Upper lobe of right lung (tissue), 1 donor: ENCODE measurements at regions of chr2 and their contacts with region 1.

Region 1: GRCh38 chr2:162221064-162221463 is 22.2 kb downstream of the FAP start:
- DNase-seq: peak; percentile 87
- ATAC-seq: peak; percentile 99
- H3K4me3 ChIP-seq: no peak overlapping the region
- H3K27ac ChIP-seq: no peak overlapping the region
- H3K4me1 ChIP-seq: no peaks in the 10 kb centered on the region
- H3K27me3 ChIP-seq: no peaks in the 10 kb centered on the region
- CTCF ChIP-seq: peak; percentile 93

Region 2: GRCh38 chr2:161943011-161943410 is 278.1 kb before region 1 on chr2:
- intact Hi-C with region 1: no loop called
- DNase-seq: no peak
- ATAC-seq: no peak
- H3K4me3 ChIP-seq: no peak overlapping the region
- H3K27ac ChIP-seq: no peak overlapping the region
- H3K4me1 ChIP-seq: no peaks in the 10 kb centered on the region
- H3K27me3 ChIP-seq: no peaks in the 10 kb centered on the region
- CTCF ChIP-seq: no peak

Region 3: GRCh38 chr2:162297925-162298552 is 77.0 kb after region 1 on chr2:
- intact Hi-C with region 1: loop called (anchors 10 kb)
- DNase-seq: no peak
- ATAC-seq: peak; percentile 76
- H3K4me3 ChIP-seq: no peak overlapping the region
- H3K27ac ChIP-seq: no peak overlapping the region
- H3K4me1 ChIP-seq: no peaks in the 10 kb centered on the region
- H3K27me3 ChIP-seq: no peaks in the 10 kb centered on the region
- CTCF ChIP-seq: peak; percentile 95

Region 4: DNA sequence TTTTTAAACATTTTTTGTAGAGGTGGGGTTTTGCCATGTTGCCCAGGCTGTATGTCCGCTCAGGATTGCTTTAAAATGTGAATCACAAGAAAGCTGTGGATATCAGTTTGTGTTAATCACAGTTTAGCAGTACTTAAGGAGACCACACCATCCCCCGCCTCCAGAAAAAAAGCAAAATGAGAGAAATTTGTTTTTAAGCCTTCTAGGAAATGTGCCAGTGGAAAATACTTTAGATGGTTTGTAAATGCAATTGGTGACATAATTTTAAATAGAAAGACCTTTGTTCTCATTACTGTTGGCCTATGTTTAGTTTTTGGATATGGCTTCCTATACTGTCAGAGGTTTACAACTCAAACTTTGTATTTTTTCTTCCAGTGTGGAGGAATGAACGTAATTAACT is 149.9 kb after region 1 on chr2:
- intact Hi-C with region 1: no loop called
- DNase-seq: no peak
- ATAC-seq: no peak
- H3K4me3 ChIP-seq: no peak overlapping the region
- H3K27ac ChIP-seq: no peak overlapping the region
- H3K4me1 ChIP-seq: no peaks in the 10 kb centered on the region
- H3K27me3 ChIP-seq: no peaks in the 10 kb centered on the region
- CTCF ChIP-seq: no peak

Region 5: DNA sequence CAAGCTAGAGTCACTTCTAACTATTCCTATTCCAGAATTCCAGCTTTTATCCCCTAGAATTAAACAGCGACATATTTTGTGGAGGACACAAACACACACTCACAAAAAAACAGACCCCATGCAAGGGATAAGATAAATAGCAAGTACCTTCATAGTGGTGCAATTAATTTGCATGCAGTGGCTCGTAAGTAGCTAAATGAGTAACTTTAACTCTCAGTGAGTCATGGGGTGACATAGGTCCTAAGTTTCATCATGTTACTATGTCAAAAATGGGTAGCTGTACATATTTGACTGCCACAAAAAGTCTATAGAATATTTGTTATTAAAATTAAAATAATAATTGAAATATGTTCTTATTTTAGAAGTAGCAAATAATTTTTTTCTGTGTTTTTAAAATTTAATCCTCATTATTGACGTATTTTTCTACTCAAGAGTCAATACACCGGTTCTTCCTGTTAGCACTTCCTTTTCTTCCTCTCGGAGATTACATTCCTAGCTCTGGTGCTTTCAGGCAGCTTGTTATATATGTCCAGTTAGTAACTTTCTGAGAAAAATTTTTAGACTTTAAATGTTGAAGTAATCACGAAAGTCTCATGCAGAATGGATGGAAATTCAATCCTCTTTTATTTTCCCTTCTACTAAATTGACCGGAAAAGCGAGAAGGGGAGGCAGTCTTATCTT is 370.5 kb after region 1 on chr2:
- intact Hi-C with region 1: no loop called
- DNase-seq: no peak
- ATAC-seq: no peak
- H3K4me3 ChIP-seq: no peak overlapping the region
- H3K27ac ChIP-seq: no peak overlapping the region
- H3K4me1 ChIP-seq: no peaks in the 10 kb centered on the region
- H3K27me3 ChIP-seq: no peaks in the 10 kb centered on the region
- CTCF ChIP-seq: no peak